Dendritic cell treated with granulocyte-macrophage colony-stimulating factor and Interleukin-4, amounts not matched to agents 40 ng/mL and 50 ng/mL, for 4 days (primary cell): ENCODE measurements at regions of chr1 and their contacts with region 1.

Region 1: DNA sequence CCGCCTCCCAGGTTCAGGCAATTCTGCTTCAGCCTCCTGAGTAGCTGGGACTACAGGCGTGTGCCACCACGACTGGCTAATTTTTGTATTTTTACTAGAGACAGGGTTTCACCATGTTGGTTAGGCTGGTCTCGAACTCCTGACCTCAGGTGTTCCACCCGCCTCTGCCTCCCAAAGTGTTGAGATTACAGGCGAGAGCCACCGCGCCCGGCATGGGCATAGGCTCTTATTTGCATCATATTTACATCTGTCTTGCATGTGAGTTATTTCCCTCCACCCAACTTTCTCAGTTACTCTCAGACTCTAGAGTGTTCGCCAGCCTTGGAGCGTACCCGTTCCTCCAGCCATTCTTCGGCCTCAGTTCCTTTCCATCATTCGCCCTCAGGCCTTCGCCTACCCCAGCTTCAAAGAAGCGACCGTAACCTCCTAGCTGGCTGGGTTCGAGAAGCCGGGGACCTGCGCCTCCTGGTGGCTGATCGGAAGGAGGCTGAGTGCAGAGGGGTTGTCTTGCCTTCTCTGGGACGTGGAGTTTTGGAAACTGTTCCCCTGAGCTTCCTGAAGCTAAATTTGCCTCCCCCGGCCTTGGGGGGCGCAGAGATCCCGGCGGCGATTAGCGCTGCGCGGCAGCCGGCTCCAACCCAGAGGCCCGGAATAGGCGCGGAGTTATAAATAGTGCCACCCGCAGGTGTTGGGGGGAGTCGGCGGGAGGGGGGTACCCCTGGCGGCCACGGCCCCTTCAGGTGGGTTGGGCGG is 3.6 kb upstream of the ZBTB7B start:
- H3K4me3 Mint-ChIP-seq: peak overlapping the region; percentile 99
- H3K27ac Mint-ChIP-seq: peak overlapping the region; percentile 63
- H3K4me1 Mint-ChIP-seq: peaks cover 66% of the 10 kb centered on the region
- H3K27me3 Mint-ChIP-seq: no peaks in the 10 kb centered on the region

Region 2: GRCh38 chr1:153946622-153947241 is 1052.3 kb before region 1 on chr1 and contains the start of gene DENND4B:
- intact Hi-C with region 1: no loop called
- H3K4me3 Mint-ChIP-seq: peak within 1 kb of the TSS; percentile 90
- H3K27ac Mint-ChIP-seq: peak within 1 kb of the TSS; percentile 99
- H3K4me1 Mint-ChIP-seq: peaks cover 83% of the 10 kb centered on the region
- H3K27me3 Mint-ChIP-seq: no peaks in the 10 kb centered on the region

Region 3: DNA sequence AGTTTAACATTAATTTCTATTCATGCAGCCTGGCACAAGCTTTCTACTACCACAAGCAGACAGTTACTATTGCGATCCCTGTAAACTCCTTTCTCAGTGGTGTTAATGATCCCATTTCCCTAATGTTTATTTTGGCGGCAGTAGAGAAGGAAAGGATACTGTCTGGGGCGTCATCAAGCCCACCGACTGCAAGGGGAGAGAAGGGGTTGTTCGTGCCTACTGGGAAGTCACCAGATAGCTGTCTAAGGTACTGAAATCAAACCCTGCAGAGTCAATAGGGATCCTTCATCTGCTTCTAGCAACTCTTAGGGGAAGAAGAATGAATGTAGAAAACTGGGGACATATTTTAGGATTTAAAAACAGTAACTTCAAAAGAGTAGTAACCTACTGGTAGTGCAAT is 295.8 kb before region 1 on chr1:
- intact Hi-C with region 1: no loop called
- H3K4me3 Mint-ChIP-seq: no peak overlapping the region
- H3K27ac Mint-ChIP-seq: no peak overlapping the region
- H3K4me1 Mint-ChIP-seq: peaks cover 3% of the 10 kb centered on the region
- H3K27me3 Mint-ChIP-seq: peaks cover 11% of the 10 kb centered on the region

Region 4: GRCh38 chr1:154809436-154810413 is 189.3 kb before region 1 on chr1:
- intact Hi-C with region 1: no loop called
- H3K4me3 Mint-ChIP-seq: no peak overlapping the region
- H3K27ac Mint-ChIP-seq: no peak overlapping the region
- H3K4me1 Mint-ChIP-seq: peaks cover 16% of the 10 kb centered on the region
- H3K27me3 Mint-ChIP-seq: peaks cover 41% of the 10 kb centered on the region

Region 5: GRCh38 chr1:154961497-154962262 is 37.3 kb before region 1 on chr1 and contains the start of gene PYGO2:
- intact Hi-C with region 1: loop called (anchors 5 kb)
- H3K4me3 Mint-ChIP-seq: peak within 1 kb of the TSS; percentile 87
- H3K27ac Mint-ChIP-seq: peak within 1 kb of the TSS; percentile 90
- H3K4me1 Mint-ChIP-seq: peaks cover 61% of the 10 kb centered on the region
- H3K27me3 Mint-ChIP-seq: no peaks in the 10 kb centered on the region

Region 6: GRCh38 chr1:154982897-154983648 is 15.9 kb before region 1 on chr1 and contains the start of gene FLAD1:
- intact Hi-C with region 1: loop called (anchors 2 kb)
- H3K4me3 Mint-ChIP-seq: no peak within 1 kb of the TSS
- H3K27ac Mint-ChIP-seq: no peak within 1 kb of the TSS
- H3K4me1 Mint-ChIP-seq: peaks cover 10% of the 10 kb centered on the region
- H3K27me3 Mint-ChIP-seq: no peaks in the 10 kb centered on the region

Region 7: GRCh38 chr1:155017041-155017945 is 18.3 kb after region 1 on chr1:
- intact Hi-C with region 1: loop called (anchors 1 kb)
- H3K4me3 Mint-ChIP-seq: peak overlapping the region; percentile 63
- H3K27ac Mint-ChIP-seq: peak overlapping the region; percentile 50
- H3K4me1 Mint-ChIP-seq: peaks cover 81% of the 10 kb centered on the region
- H3K27me3 Mint-ChIP-seq: no peaks in the 10 kb centered on the region

Region 8: GRCh38 chr1:155553349-155553748 is 554.4 kb after region 1 on chr1:
- intact Hi-C with region 1: no loop called
- H3K4me3 Mint-ChIP-seq: no peak overlapping the region
- H3K27ac Mint-ChIP-seq: no peak overlapping the region
- H3K4me1 Mint-ChIP-seq: peaks cover 26% of the 10 kb centered on the region
- H3K27me3 Mint-ChIP-seq: no peaks in the 10 kb centered on the region